IMR-90 (cell line): ENCODE measurements at regions of chr15 and their contacts with region 1.

Region 1: DNA sequence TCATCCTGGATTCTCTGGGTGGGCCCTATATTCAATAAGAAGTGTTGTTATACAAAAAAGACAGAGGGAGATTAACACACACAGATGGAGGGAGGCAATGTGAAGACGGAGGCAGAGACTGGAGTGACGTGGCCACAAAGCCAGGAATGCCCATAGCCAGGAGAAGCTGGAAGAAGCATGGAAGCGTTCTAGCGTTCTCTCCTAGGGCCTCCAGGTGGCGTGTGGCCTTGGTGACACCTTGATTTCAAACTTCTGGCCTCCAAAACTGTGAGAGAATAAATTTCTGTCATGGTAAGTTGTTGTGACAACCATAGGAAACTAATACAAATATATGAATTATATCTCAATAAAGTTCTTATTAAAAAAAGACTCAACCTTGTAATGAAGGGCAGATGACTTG is 21.3 kb downstream of the THBS1 start:
- DNase-seq: no peak
- ATAC-seq: no peak
- H3K4me3 ChIP-seq: no peak overlapping the region
- H3K27ac ChIP-seq: no peak overlapping the region
- H3K4me1 ChIP-seq: peaks cover 2% of the 10 kb centered on the region; the same call in 1 of the 2 replicates
- H3K27me3 ChIP-seq: no peaks in the 10 kb centered on the region
- CTCF ChIP-seq: 0 out of 2 replicates have a peak, but pooled peaks have one; percentile 7
- POLR2A ChIP-seq: no peak
- RAD21 ChIP-seq: no peak

Region 2: DNA sequence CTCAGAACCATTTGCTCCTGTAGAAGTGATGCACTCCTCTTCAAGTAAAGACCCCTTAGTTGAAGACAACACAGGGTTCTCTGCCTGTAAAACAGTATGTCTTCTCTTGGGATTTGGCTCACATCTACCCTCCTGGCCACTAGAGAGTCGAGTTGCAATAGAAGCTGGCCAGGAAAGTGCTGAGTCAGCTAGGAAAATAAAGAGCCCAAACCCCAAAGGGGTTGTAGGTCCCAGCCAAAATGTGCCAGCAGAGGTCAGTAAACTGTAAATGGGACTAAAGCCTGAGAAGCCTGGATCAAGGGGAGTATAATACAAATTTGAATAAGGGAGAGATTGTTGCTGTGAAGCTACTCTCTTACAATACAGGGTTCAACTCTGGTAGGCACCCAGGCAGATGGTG is 58.5 kb before region 1 on chr15:
- CTCF ChIA-PET with region 1: no interaction called
- POLR2A ChIA-PET with region 1: no interaction called
- dilution Hi-C with region 1: no loop called
- in situ Hi-C with region 1: no loop called
- intact Hi-C with region 1: no loop called
- DNase-seq: no peak
- ATAC-seq: no peak
- H3K4me3 ChIP-seq: no peak overlapping the region
- H3K27ac ChIP-seq: no peak overlapping the region
- H3K4me1 ChIP-seq: no peaks in the 10 kb centered on the region
- H3K27me3 ChIP-seq: no peaks in the 10 kb centered on the region
- CTCF ChIP-seq: no peak
- POLR2A ChIP-seq: no peak
- RAD21 ChIP-seq: no peak

Region 3: GRCh38 chr15:39580117-39580484 is 22.0 kb before region 1 on chr15:
- CTCF ChIA-PET with region 1: no interaction called
- POLR2A ChIA-PET with region 1: no interaction called
- dilution Hi-C with region 1: no loop called
- in situ Hi-C with region 1: no loop called
- intact Hi-C with region 1: no loop called
- DNase-seq: peak; percentile 98
- ATAC-seq: peak; percentile 30
- H3K4me3 ChIP-seq: peak overlapping the region; percentile 46
- H3K27ac ChIP-seq: peak overlapping the region; percentile 78
- H3K4me1 ChIP-seq: peaks cover 8% of the 10 kb centered on the region
- H3K27me3 ChIP-seq: no peaks in the 10 kb centered on the region
- CTCF ChIP-seq: peak; percentile 99
- POLR2A ChIP-seq: no peak
- RAD21 ChIP-seq: peak; percentile 94

Region 4: GRCh38 chr15:39661776-39662175 is 59.6 kb after region 1 on chr15:
- CTCF ChIA-PET with region 1: no interaction called
- POLR2A ChIA-PET with region 1: no interaction called
- dilution Hi-C with region 1: no loop called
- in situ Hi-C with region 1: no loop called
- intact Hi-C with region 1: loop called (anchors 5 kb)
- DNase-seq: peak; percentile 31
- ATAC-seq: peak; percentile 52
- H3K4me3 ChIP-seq: no peak overlapping the region
- H3K27ac ChIP-seq: no peak overlapping the region
- H3K4me1 ChIP-seq: peaks cover 8% of the 10 kb centered on the region
- H3K27me3 ChIP-seq: no peaks in the 10 kb centered on the region
- CTCF ChIP-seq: no peak
- POLR2A ChIP-seq: no peak
- RAD21 ChIP-seq: no peak

Region 5: GRCh38 chr15:39680868-39681267 is 78.7 kb after region 1 on chr15:
- CTCF ChIA-PET with region 1: no interaction called
- POLR2A ChIA-PET with region 1: interaction called, 3 read pairs
- dilution Hi-C with region 1: no loop called
- in situ Hi-C with region 1: no loop called
- intact Hi-C with region 1: loop called (anchors 5 kb)
- DNase-seq: peak; percentile 52
- ATAC-seq: peak; percentile 65
- H3K4me3 ChIP-seq: no peak overlapping the region
- H3K27ac ChIP-seq: no peak overlapping the region
- H3K4me1 ChIP-seq: peaks cover 3% of the 10 kb centered on the region
- H3K27me3 ChIP-seq: no peaks in the 10 kb centered on the region
- CTCF ChIP-seq: no peak
- POLR2A ChIP-seq: no peak
- RAD21 ChIP-seq: no peak

Region 6: DNA sequence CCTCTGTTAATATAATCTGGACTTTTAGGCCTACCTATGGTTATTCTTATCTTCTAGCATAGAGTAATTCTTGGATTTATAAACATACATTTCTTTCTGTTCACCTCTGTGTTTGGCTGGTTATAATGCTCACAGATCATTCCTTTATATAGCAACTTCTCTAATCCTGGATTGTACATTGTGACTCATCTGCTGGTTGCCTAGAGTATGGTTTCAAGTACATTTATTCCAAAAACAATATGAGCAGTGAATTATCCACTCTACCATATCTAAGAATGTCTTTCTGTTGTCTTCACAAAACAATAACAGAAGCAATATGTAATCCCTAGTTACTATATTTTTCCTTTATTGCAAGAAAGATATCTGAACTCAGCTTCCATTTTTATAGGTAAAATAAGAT is 145.2 kb after region 1 on chr15:
- CTCF ChIA-PET with region 1: no interaction called
- POLR2A ChIA-PET with region 1: no interaction called
- dilution Hi-C with region 1: no loop called
- in situ Hi-C with region 1: loop called (anchors 10 kb)
- intact Hi-C with region 1: no loop called
- DNase-seq: peak; percentile 84
- ATAC-seq: peak; percentile 85
- H3K4me3 ChIP-seq: no peak overlapping the region
- H3K27ac ChIP-seq: no peak overlapping the region
- H3K4me1 ChIP-seq: no peaks in the 10 kb centered on the region
- H3K27me3 ChIP-seq: no peaks in the 10 kb centered on the region
- CTCF ChIP-seq: no peak
- POLR2A ChIP-seq: no peak
- RAD21 ChIP-seq: no peak

Region 7: GRCh38 chr15:39756806-39757522 is 154.8 kb after region 1 on chr15:
- CTCF ChIA-PET with region 1: interaction called, 4 read pairs
- POLR2A ChIA-PET with region 1: interaction called, 4 read pairs
- dilution Hi-C with region 1: no loop called
- in situ Hi-C with region 1: no loop called
- intact Hi-C with region 1: loop called (anchors 1 kb)
- DNase-seq: peak; percentile 83
- ATAC-seq: peak; percentile 35; the same call in 1 of the 2 replicates
- H3K4me3 ChIP-seq: no peak overlapping the region
- H3K27ac ChIP-seq: no peak overlapping the region
- H3K4me1 ChIP-seq: no peaks in the 10 kb centered on the region
- H3K27me3 ChIP-seq: no peaks in the 10 kb centered on the region
- CTCF ChIP-seq: peak; percentile 80
- POLR2A ChIP-seq: no peak
- RAD21 ChIP-seq: peak; percentile 76